BJ (cell line): ENCODE measurements at regions of chr1 and their contacts with region 1.

Region 1: GRCh38 chr1:39196244-39197215 is 8.0 kb upstream of the MACF1 start:
- DNase-seq: peak; percentile 50
- H3K4me3 ChIP-seq: no peak overlapping the region
- H3K27me3 ChIP-seq: no peaks in the 10 kb centered on the region
- CTCF ChIP-seq: no peak

Region 2: DNA sequence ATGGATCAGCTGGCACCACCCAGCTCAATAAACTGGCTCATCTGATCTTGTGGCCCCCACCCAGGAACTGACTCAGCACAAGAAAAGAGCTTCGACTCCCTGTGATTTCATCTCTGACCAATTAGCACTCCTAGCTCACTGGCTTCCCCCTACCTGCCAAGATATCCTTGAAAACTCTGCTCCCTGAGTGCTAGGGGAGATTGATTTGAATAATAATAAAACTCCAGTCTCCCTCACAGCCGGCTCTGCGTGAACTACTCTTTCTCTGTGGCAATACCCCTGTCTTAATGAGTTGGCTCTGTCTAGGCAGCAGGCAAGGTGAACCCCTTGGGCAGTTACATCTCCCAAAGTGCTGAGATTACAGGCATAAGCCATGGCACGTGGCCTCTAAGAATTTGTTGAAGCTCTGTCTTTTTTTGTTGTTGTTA is 243.1 kb before region 1 on chr1:
- CTCF ChIA-PET with region 1: no interaction called
- POLR2A ChIA-PET with region 1: no interaction called
- DNase-seq: no peak
- H3K4me3 ChIP-seq: no peak overlapping the region
- H3K27me3 ChIP-seq: no peaks in the 10 kb centered on the region
- CTCF ChIP-seq: no peak

Region 3: GRCh38 chr1:39098546-39099250 is 97.8 kb before region 1 on chr1:
- CTCF ChIA-PET with region 1: interaction called, 55 read pairs
- POLR2A ChIA-PET with region 1: interaction called, 4 read pairs
- DNase-seq: peak; percentile 70
- H3K4me3 ChIP-seq: no peak overlapping the region
- H3K27me3 ChIP-seq: no peaks in the 10 kb centered on the region
- CTCF ChIP-seq: peak; percentile 80

Region 4: DNA sequence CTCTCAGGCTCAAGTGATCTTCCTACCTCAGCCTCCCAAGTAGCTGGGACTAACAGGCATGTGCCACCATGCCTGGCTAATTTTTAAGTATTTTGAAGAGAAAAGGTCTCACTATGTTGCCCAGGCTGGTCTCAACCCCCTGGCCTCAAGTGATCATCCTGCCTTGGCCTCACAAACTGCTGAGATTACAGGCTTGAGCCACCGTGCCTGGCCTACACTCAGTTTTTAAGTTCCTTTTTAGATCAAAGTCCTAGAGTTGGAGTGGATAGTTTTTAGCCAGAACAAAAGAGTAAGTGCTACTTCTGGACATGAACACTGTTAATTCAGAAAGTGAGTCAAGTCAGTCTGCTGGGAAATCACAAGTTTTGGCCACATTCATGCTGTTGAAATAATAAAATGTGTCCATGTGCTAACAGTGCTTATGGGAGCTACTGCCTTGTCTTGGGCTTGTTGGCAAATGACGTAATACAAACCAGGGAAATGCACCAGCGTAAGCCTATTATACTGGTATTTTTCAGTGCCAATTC is 86.1 kb before region 1 on chr1:
- CTCF ChIA-PET with region 1: interaction called, 21 read pairs
- POLR2A ChIA-PET with region 1: interaction called, 14 read pairs
- DNase-seq: peak; percentile 65
- H3K4me3 ChIP-seq: no peak overlapping the region
- H3K27me3 ChIP-seq: no peaks in the 10 kb centered on the region
- CTCF ChIP-seq: no peak

Region 5: DNA sequence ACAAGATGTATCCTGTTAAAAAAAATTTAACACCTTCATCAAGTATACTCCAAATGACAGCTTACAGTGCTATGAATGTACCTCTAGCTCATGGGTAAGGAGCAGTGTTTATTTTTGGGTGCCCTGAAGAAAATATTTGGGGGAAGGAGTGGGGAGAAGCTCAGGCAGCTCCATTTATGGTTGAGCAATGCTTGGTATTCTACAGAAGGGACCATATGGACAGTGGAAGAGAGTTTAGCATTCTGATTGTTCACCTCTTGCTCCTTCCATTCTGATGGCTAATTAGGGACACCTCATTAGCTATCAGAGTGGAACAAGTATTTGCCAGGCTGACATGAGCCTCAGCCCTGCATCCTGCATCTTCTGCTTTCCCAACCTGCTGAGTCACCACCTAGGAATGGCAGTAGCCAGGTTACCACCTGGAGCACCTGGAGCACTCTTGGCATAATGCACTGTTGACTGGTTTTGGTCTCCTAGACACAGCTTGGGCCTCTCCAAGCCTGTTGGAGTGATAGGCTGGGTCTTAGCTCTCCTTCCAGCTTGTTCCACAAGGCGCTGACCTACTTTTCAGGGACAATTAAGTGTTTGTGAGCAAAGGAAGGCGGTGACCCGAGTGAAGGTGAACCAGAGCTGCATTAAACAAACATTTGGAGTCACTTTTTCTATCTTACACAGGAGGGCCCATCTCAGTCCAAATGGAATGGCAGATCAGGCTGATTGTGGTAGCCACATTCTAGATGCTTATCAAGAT is 54.0 kb before region 1 on chr1:
- CTCF ChIA-PET with region 1: interaction called, 35 read pairs
- POLR2A ChIA-PET with region 1: interaction called, 4 read pairs
- DNase-seq: no peak
- H3K4me3 ChIP-seq: no peak overlapping the region
- H3K27me3 ChIP-seq: no peaks in the 10 kb centered on the region
- CTCF ChIP-seq: no peak

Region 6: GRCh38 chr1:39183503-39184353 is 12.8 kb before region 1 on chr1:
- CTCF ChIA-PET with region 1: interaction called, 14 read pairs
- POLR2A ChIA-PET with region 1: no interaction called
- DNase-seq: peak; percentile 27
- H3K4me3 ChIP-seq: no peak overlapping the region
- H3K27me3 ChIP-seq: no peaks in the 10 kb centered on the region
- CTCF ChIP-seq: peak; percentile 35

Region 7: DNA sequence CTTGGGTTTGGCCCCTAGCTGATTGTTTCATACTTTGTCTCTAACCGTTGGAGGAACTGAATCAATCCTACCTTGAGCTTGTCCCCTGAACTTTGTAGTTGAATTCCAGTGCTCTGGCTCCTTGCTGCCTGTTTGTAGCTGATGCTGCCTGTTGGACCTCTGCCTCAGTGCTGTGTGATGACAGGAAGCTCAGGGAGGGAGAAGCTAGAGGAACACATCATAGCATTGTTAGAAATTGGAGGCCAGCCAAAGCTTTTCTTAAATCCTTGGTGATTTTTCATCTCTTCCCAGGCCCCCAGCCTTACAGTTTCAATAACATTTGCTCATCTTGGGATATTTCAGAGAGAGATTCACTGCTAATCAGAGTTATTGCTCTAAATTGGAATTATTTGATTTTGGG is 41.9 kb after region 1 on chr1:
- CTCF ChIA-PET with region 1: interaction called, 14 read pairs
- POLR2A ChIA-PET with region 1: no interaction called
- DNase-seq: no peak
- H3K4me3 ChIP-seq: no peak overlapping the region
- H3K27me3 ChIP-seq: no peaks in the 10 kb centered on the region
- CTCF ChIP-seq: no peak

Region 8: DNA sequence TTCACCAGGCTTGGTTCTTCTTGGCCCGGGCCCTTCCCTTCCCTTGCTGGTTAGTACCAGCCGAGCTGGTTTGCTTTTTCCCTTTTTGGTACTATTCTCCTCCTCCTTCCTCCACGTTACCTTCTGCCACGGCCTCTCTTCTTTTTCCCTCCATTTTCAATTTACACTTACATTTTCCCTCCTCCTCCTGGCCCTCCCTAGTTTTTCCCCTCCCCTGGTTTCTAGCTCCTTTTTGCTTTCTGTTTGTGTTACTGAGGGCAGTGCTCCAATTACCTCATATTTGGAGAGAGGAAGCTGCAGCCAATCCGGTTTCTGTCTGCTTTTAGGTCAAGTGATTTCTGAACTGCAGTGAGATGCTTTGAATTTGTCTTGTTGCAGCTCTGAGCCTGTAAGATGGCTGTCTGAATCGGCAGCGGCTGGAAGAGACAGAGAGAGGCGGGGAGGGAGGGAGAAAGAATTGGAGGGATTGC is 71.6 kb after region 1 on chr1:
- CTCF ChIA-PET with region 1: interaction called, 23 read pairs
- POLR2A ChIA-PET with region 1: no interaction called
- DNase-seq: peak; percentile 68
- H3K4me3 ChIP-seq: peak overlapping the region; percentile 34
- H3K27me3 ChIP-seq: no peaks in the 10 kb centered on the region
- CTCF ChIP-seq: no peak